ENCODE measurements at regions of chr3 and their contacts with region 1.

Region 1: DNA sequence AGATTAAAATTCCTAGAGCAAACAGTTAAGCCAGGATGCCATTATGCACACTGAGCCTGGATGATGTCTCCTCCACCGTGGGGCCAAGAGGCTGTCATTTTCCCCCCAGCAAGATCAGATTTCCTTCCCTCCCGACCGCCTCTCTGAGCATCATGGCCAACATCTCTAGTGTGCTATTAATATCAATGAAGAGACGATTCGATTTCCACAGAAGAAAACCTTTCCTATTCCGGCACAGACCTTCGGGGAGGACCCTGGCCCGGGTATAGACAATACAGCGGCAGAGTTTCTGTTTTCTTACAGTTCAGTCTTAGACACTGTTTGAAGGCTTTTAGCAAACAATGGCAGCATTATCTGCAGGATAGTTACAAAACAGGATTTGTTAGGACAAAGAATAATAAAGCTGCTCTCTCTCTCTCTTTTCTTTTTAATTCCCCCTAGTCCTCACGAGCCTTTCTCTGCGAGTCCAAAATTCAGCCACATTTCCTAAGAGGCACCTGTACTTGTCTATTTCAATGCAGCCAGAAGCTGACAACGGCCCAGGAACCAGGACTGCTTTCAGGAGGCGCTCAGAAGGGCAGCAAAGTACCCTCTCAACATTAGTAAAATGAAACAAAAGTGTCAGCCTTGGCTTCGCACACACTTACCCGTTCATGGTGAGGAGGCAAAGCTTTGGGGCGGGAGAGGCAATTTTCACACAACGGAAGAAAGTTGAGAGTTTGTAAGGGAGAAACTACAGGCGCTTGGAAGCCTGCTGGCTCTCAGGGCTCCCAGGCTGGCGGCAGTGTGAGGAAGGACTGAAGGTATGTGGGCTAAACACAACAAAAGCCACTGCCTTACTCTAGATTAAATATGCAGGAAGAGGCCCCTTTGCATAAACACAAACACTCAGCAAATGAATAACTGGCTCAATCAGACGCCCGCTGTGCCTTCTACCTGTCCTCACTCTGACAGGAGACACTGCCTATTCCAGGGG is 278.0 kb downstream of the FOXP1 start:
- DNase-seq: no peak
- ATAC-seq: peak; percentile 38
- H3K4me3 Mint-ChIP-seq: peak overlapping the region; percentile 92
- H3K27ac Mint-ChIP-seq: peak overlapping the region; percentile 94
- H3K4me1 Mint-ChIP-seq: peaks cover 79% of the 10 kb centered on the region
- H3K27me3 Mint-ChIP-seq: no peaks in the 10 kb centered on the region
- CTCF ChIP-seq: no peak

Region 2: DNA sequence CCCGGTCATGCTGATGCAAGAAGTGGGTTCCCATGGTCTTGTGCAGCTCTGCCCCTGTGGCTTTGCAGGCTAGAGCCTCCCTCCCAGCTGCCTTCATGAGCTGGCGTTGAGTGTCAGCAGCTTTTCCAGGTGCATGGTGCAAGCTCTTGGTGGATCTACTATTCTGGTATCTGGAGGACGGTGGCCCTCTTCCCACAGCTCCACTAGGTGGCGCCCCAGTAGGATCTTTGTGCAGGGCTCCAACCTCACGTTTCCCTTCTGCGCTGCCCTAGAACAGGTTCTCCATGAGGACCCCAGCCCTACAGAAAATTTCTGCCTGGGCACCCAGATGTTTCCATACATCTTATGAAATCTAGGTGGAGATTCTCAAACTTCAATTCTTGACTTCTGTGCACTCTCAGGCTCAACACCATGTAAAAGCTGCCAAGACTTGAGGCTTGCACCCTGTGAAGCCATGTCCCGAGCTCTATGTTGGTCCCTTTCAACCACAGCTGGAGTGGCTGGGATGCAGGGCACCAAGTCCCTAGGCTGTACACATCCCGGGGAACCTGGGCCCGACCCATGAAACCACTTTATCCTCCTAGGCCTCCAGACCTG is 754.7 kb before region 1 on chr3:
- CTCF ChIA-PET with region 1: interaction called, 7 read pairs
- POLR2A ChIA-PET with region 1: no interaction called
- intact Hi-C with region 1: loop called (anchors 1 kb)
- DNase-seq: peak; percentile 61
- ATAC-seq: peak; percentile 75
- H3K4me3 Mint-ChIP-seq: no peak overlapping the region
- H3K27ac Mint-ChIP-seq: no peak overlapping the region
- H3K4me1 Mint-ChIP-seq: no peaks in the 10 kb centered on the region
- H3K27me3 Mint-ChIP-seq: peaks cover 4% of the 10 kb centered on the region
- CTCF ChIP-seq: no peak

Region 3: GRCh38 chr3:71080517-71081083 is 224.9 kb before region 1 on chr3:
- CTCF ChIA-PET with region 1: no interaction called
- POLR2A ChIA-PET with region 1: interaction called, 69 read pairs
- intact Hi-C with region 1: loop called (anchors 2 kb)
- DNase-seq: no peak
- ATAC-seq: no peak
- H3K4me3 Mint-ChIP-seq: peak overlapping the region; percentile 57
- H3K27ac Mint-ChIP-seq: peak overlapping the region; percentile 74
- H3K4me1 Mint-ChIP-seq: peaks cover 93% of the 10 kb centered on the region
- H3K27me3 Mint-ChIP-seq: no peaks in the 10 kb centered on the region
- CTCF ChIP-seq: no peak

Region 4: DNA sequence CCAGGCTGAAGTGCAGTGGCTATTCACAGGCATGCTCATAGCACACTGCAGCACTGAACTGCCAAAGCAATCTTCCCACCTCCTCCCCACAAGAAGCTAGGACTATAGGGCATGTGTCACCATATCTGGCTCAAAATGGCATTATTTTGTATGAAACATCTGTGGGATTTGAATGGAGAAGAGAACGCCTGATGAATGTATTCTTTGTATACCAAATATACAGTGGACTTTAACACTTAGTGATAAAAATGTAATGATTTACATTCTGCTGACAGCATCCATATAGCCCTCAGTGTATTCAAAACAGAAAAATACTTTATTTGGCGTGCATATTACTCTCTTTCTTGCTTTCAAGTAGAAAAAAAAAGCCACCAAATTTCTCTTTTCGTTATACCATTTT is 20.2 kb after region 1 on chr3:
- CTCF ChIA-PET with region 1: no interaction called
- POLR2A ChIA-PET with region 1: no interaction called
- intact Hi-C with region 1: loop called (anchors 2 kb)
- DNase-seq: no peak
- ATAC-seq: no peak
- H3K4me3 Mint-ChIP-seq: no peak overlapping the region
- H3K27ac Mint-ChIP-seq: no peak overlapping the region
- H3K4me1 Mint-ChIP-seq: peaks cover 13% of the 10 kb centered on the region
- H3K27me3 Mint-ChIP-seq: no peaks in the 10 kb centered on the region
- CTCF ChIP-seq: no peak

Region 5: DNA sequence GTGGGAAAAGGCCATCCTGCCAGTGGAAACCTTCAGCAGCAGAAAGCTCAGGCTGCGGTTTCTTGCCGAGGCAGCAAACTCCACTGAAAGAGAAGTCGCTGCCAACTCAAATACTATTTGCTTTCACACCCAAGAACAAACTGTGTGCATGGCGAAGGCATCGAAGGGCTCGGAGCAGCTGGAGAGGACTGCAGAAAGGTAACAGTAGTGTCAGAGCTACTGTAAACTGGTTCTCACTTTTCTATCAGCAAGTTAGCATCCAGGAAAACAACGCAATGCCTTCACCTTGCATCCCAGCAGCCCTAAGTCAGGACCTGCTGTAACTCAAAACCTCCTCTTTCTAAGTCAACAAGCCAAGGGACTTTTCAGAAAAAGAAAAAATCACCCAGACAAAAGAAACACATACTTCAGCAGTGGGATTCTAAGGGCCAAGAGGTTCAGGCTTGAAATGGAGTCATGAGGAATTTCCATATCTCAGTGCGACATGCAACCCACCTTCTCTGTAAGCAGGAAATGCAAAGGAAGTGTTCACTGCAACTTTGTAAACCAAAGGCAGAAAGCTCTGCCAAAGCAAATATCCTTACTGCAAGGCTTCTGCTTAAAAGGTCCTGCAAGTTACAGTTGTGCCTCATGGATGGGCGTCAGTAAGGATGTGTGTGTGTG is 84.5 kb after region 1 on chr3:
- CTCF ChIA-PET with region 1: interaction called, 5 read pairs
- POLR2A ChIA-PET with region 1: interaction called, 5 read pairs
- intact Hi-C with region 1: loop called (anchors 2 kb)
- DNase-seq: no peak
- ATAC-seq: peak; percentile 6
- H3K4me3 Mint-ChIP-seq: peak overlapping the region; percentile 73
- H3K27ac Mint-ChIP-seq: peak overlapping the region; percentile 99
- H3K4me1 Mint-ChIP-seq: peaks cover 86% of the 10 kb centered on the region
- H3K27me3 Mint-ChIP-seq: no peaks in the 10 kb centered on the region
- CTCF ChIP-seq: no peak

Measured in activated B cell treated with CpG ODN at 0.5 μM for 24 hours (primary cell).